ENCODE measurements at regions of chr10 and their contacts with region 1.

Region 1: GRCh38 chr10:78458983-78459638 is 425.4 kb downstream of the RPS24 start:
- DNase-seq: no peak
- H3K4me3 ChIP-seq: no peak overlapping the region
- H3K27ac ChIP-seq: no peak overlapping the region
- H3K4me1 ChIP-seq: no peaks in the 10 kb centered on the region
- H3K27me3 ChIP-seq: no peaks in the 10 kb centered on the region
- CTCF ChIP-seq: no peak
- POLR2A ChIP-seq: no peak

Region 2: GRCh38 chr10:78470267-78471103 is 11.4 kb after region 1 on chr10:
- intact Hi-C with region 1: loop called (anchors 1 kb)
- DNase-seq: no peak
- H3K4me3 ChIP-seq: no peak overlapping the region
- H3K27ac ChIP-seq: no peak overlapping the region
- H3K4me1 ChIP-seq: no peaks in the 10 kb centered on the region
- H3K27me3 ChIP-seq: no peaks in the 10 kb centered on the region
- CTCF ChIP-seq: no peak
- POLR2A ChIP-seq: no peak

Region 3: DNA sequence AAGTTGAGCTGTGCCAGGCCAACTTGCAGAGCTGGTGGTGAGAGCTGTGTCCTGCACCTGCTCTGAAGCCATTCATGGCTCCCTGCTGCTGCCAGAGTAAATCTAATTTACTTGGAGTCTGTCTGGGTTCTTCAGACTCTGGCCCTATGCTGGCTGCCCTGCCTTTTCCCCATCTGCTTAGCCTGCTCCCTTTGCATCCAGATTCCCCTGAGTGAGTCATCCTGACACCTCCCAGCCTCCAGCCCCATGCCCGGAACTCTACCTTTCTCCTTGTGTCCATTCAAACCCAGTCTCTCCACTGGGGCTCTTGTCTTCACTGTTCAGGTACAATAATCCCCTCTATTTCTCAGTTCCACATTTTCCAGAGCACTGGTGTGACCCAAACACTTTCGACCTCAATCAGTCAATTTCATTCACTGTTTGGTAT is 175.3 kb after region 1 on chr10:
- intact Hi-C with region 1: no loop called
- DNase-seq: no peak
- H3K4me3 ChIP-seq: no peak overlapping the region
- H3K27ac ChIP-seq: no peak overlapping the region
- H3K4me1 ChIP-seq: no peaks in the 10 kb centered on the region
- H3K27me3 ChIP-seq: no peaks in the 10 kb centered on the region
- CTCF ChIP-seq: no peak
- POLR2A ChIP-seq: no peak